Activated CD4-positive, alpha-beta memory T cell treated with anti-CD3 and anti-CD28 coated beads for 36 hours (primary cell): ENCODE measurements at regions of chr6 and their contacts with region 1.

Region 1: DNA sequence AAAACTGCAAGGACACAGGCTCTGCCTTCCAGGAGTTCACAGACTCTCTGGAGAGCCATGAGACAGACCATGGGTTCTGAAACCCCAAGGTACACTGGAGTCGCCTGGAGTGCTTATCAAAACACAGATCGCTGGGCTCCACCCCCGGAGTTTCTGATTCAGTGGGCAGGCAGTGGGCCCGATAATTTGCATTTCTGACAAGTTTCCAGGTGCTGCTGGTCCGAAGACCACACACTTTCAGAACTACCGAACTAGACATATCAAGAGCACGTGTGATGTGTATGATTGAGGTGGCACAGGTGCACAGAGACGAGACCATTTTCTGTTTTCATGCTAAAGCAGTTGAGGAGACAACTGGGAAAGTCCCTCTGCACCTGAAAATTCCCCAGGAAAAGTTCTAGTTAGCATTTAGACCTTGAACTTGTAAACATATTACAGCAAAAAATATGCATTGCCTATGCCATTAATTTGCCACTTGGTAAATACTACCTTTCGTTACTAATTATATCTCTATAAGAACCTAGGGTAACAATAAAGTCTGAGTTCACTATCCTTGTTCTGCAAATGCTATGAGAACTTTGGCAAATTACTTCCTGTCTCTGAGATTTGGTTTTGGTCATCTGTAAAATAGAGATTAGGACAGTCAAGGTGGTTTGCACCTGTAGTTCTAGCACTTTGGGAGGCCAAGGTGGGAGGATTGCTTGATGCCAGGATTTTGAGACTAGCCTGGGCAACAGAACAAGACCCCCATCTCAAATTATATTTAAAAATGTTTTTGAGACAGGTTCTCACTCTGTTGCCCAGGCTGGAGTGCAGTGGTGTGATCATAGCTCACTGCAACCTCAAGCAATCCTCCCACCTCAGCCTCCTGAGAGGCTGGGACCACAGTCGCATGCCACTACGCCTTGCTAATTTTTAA is 14.3 kb upstream of the PIM1 start:
- DNase-seq: peak; percentile 90
- H3K4me3 Mint-ChIP-seq: peak overlapping the region; percentile 48
- H3K27ac Mint-ChIP-seq: peak overlapping the region; percentile 83
- H3K4me1 Mint-ChIP-seq: peaks cover 41% of the 10 kb centered on the region
- H3K27me3 Mint-ChIP-seq: no peaks in the 10 kb centered on the region

Region 2: DNA sequence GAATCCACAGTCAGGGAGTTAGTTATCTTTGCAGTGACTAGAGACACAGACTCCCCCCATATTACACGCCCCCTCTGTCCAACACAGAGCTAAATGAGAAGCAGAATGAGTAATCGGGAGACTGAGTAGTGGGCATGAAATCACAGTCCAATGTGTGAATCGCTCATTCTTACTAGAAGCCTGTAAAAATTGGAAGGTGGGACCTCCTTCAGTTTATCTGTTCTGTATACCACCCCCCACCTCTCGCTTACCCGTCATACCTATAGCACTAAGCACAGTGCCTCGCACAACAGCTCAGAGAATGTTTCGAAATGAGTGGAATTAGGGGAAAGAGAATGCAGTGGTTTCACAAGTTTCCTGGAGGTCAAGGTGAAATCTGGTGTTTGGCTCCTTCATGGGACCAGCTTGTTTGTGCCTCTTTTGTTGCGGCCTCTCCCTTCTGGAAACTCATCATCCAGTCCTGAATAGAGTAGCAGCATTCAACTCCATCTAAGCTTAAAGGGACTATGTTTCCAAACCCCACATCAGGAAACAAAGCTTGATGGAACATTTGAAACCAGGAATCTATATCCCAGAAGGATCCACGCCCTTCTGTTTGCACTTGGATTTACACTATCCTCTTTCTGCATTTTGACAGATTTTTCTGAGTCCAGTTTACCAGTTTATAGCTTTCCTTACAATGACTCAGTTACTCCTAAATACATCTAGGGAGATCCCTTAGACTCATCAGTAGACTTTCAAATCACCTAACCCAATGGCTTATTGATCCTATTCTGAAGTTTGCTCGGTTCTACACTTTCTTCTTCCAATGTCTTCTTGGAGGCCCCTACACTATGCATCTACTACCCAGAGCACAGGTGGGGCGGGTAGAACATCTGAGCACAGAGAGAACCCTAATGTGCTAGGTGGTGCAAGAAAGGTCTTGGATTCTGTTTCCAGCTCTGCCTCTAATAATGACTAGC is 44.9 kb before region 1 on chr6:
- CTCF ChIA-PET with region 1: no interaction called
- POLR2A ChIA-PET with region 1: interaction called, 3 read pairs
- intact Hi-C with region 1: loop called (anchors 1 kb)
- DNase-seq: peak; percentile 75
- H3K4me3 Mint-ChIP-seq: no peak overlapping the region
- H3K27ac Mint-ChIP-seq: peak overlapping the region; percentile 82
- H3K4me1 Mint-ChIP-seq: peaks cover 28% of the 10 kb centered on the region
- H3K27me3 Mint-ChIP-seq: no peaks in the 10 kb centered on the region